Calu3 (cell line): ENCODE measurements at regions of chr7 and their contacts with region 1.

Region 1: GRCh38 chr7:129367700-129368388 is 66.4 kb upstream of the STRIP2 start:
- DNase-seq: peak; percentile 84
- H3K4me3 Mint-ChIP-seq: peak overlapping the region; percentile 74
- H3K27ac Mint-ChIP-seq: peak overlapping the region; percentile 87
- H3K4me1 Mint-ChIP-seq: peaks cover 29% of the 10 kb centered on the region
- H3K27me3 Mint-ChIP-seq: no peaks in the 10 kb centered on the region
- CTCF ChIP-seq: peak; percentile 76

Region 2: GRCh38 chr7:129188372-129188891 is 179.4 kb before region 1 on chr7 and contains the start of gene SMO:
- CTCF ChIA-PET with region 1: no interaction called
- intact Hi-C with region 1: no loop called
- DNase-seq: no peak
- H3K4me3 Mint-ChIP-seq: peak within 1 kb of the TSS; percentile 65
- H3K27ac Mint-ChIP-seq: no peak within 1 kb of the TSS
- H3K4me1 Mint-ChIP-seq: peaks cover 9% of the 10 kb centered on the region
- H3K27me3 Mint-ChIP-seq: peaks cover 55% of the 10 kb centered on the region
- CTCF ChIP-seq: no peak
- total RNA-seq, gene SMO: 2.1 and 3.6 TPM in 2 replicates

Region 3: GRCh38 chr7:129224251-129225205 is 143.3 kb before region 1 on chr7 and contains the start of gene AHCYL2:
- CTCF ChIA-PET with region 1: interaction called, 3 read pairs
- intact Hi-C with region 1: loop called (anchors 10 kb)
- DNase-seq: peak; percentile 96
- H3K4me3 Mint-ChIP-seq: peak within 1 kb of the TSS; percentile 84
- H3K27ac Mint-ChIP-seq: peak within 1 kb of the TSS; percentile 95
- H3K4me1 Mint-ChIP-seq: peaks cover 10% of the 10 kb centered on the region
- H3K27me3 Mint-ChIP-seq: no peaks in the 10 kb centered on the region
- CTCF ChIP-seq: no peak
- total RNA-seq, gene AHCYL2: 54.6 and 66.4 TPM in 2 replicates

Region 4: DNA sequence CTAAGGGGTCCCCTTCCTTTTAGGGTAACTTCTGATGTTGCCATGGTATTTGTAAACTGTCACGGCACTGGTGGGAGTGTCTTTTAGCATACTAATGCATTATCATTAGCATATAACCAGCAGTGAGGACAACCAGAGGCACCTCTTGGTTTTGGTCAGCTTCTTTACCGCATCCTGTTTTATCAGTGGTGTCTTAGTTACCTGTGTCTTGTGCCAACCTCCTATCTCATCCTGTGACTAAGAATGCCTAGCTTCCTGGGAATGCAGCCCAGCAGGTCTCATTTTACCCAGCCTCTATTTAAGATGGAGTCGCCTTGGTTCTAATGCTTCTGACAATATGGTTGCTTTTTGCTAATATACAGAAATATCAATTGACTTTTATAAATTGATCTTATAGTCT is 88.1 kb before region 1 on chr7:
- CTCF ChIA-PET with region 1: no interaction called
- intact Hi-C with region 1: no loop called
- DNase-seq: peak; percentile 4
- H3K4me3 Mint-ChIP-seq: no peak overlapping the region
- H3K27ac Mint-ChIP-seq: no peak overlapping the region
- H3K4me1 Mint-ChIP-seq: peaks cover 37% of the 10 kb centered on the region
- H3K27me3 Mint-ChIP-seq: no peaks in the 10 kb centered on the region
- CTCF ChIP-seq: no peak

Region 5: DNA sequence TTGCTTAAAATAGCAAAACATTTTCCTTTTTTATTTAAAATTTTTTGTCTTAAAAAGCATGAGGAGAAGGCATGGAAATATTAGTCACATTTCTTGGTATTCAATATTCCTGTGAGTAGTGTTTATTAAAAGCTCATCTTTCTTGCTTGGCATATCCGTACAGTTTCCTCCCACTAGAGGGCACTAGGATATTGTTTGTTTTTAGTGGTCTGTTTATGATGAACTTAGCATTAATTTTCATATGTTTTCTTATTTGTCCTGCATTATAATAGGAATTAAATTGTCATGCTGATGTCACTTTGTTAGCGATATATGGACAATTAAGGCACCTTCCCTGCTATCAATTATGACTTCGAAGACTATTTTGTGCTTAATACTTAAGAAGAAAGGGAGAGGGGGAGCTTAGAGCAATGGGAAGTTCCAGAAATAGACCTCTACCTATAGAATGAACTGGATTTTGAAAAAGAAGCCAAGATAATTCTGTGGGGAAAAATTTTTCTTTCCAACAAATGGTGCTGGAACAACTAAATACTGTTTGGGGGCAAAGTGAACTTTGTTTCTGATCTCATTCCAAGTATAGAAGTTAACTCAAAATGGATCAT is 24.6 kb before region 1 on chr7:
- CTCF ChIA-PET with region 1: interaction called, 26 read pairs
- intact Hi-C with region 1: no loop called
- DNase-seq: peak; percentile 38
- H3K4me3 Mint-ChIP-seq: no peak overlapping the region
- H3K27ac Mint-ChIP-seq: no peak overlapping the region
- H3K4me1 Mint-ChIP-seq: no peaks in the 10 kb centered on the region
- H3K27me3 Mint-ChIP-seq: no peaks in the 10 kb centered on the region
- CTCF ChIP-seq: peak; percentile 49

Region 6: DNA sequence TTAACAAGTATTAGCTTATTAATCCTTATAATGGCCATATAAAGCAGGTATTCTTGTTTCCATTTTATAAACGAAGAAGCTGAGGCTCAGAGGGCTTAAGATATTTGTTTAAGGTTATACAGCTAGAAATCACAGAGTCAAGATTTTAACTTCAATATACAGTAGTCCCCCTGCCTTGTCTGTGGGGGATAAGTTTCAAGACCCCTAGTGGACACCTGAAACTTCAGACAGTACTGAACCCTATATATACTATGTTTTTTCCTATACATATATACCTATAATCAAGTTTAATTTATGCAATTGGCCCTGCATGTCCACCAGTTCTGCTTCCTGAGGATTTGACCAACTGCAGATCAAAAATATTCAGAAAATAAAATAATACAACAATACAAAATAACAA is 22.0 kb after region 1 on chr7:
- CTCF ChIA-PET with region 1: no interaction called
- intact Hi-C with region 1: no loop called
- DNase-seq: no peak
- H3K4me3 Mint-ChIP-seq: no peak overlapping the region
- H3K27ac Mint-ChIP-seq: no peak overlapping the region
- H3K4me1 Mint-ChIP-seq: no peaks in the 10 kb centered on the region
- H3K27me3 Mint-ChIP-seq: no peaks in the 10 kb centered on the region
- CTCF ChIP-seq: no peak

Region 7: GRCh38 chr7:129401967-129402860 is 34.4 kb after region 1 on chr7:
- CTCF ChIA-PET with region 1: interaction called, 13 read pairs
- intact Hi-C with region 1: no loop called
- DNase-seq: no peak
- H3K4me3 Mint-ChIP-seq: no peak overlapping the region
- H3K27ac Mint-ChIP-seq: no peak overlapping the region
- H3K4me1 Mint-ChIP-seq: no peaks in the 10 kb centered on the region
- H3K27me3 Mint-ChIP-seq: no peaks in the 10 kb centered on the region
- CTCF ChIP-seq: no peak

Region 8: DNA sequence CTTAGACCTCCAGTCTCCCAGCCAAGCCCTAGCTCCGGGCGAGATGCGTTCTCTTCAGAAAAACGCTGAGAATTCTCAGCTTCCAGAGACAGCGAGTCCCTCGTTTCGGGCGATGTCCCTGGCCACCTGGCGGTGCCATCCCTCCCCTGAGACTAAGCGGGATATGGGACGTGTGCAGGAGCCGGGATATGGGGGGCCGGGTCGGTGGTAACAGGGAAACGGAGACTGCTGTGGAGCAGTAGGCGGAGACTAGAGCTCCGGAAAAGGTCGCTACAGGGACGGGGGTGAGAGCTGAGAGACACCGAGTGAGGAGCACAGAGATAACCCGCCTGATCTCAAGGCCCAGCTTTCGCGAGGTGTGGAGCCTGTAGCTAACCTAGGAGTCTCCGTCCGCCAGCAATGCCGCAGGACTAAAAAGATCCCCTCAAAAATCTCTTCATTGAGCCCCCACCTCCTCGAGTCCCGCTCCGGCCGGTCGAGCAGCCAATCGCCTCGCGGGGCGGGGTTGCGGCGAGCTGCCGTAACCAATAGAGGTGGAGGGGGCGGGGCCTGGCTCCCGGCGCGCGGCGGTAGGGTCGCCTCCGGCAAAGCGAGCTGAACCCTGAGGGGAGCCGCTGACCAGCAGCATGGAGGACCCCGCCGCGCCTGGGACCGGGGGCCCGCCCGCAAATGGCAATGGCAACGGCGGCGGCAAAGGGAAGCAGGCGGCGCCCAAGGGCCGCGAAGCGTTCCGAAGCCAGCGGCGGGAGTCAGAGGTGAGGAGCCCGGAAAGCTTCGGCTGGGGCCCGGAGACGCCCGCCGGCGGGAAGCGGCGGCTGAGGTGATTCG is 66.2 kb after region 1 on chr7 and contains the start of gene STRIP2:
- CTCF ChIA-PET with region 1: interaction called, 21 read pairs
- intact Hi-C with region 1: no loop called
- DNase-seq: peak; percentile 94
- H3K4me3 Mint-ChIP-seq: peak within 1 kb of the TSS; percentile 94
- H3K27ac Mint-ChIP-seq: peak within 1 kb of the TSS; percentile 73
- H3K4me1 Mint-ChIP-seq: peaks cover 29% of the 10 kb centered on the region
- H3K27me3 Mint-ChIP-seq: peaks cover 15% of the 10 kb centered on the region
- CTCF ChIP-seq: no peak
- total RNA-seq, gene STRIP2: 10.1 and 13.2 TPM in 2 replicates

Region 9: GRCh38 chr7:129468087-129468486 is 100.2 kb after region 1 on chr7:
- CTCF ChIA-PET with region 1: interaction called, 9 read pairs
- intact Hi-C with region 1: loop called (anchors 1 kb)
- DNase-seq: no peak
- H3K4me3 Mint-ChIP-seq: no peak overlapping the region
- H3K27ac Mint-ChIP-seq: no peak overlapping the region
- H3K4me1 Mint-ChIP-seq: no peaks in the 10 kb centered on the region
- H3K27me3 Mint-ChIP-seq: no peaks in the 10 kb centered on the region
- CTCF ChIP-seq: no peak

Region 10: DNA sequence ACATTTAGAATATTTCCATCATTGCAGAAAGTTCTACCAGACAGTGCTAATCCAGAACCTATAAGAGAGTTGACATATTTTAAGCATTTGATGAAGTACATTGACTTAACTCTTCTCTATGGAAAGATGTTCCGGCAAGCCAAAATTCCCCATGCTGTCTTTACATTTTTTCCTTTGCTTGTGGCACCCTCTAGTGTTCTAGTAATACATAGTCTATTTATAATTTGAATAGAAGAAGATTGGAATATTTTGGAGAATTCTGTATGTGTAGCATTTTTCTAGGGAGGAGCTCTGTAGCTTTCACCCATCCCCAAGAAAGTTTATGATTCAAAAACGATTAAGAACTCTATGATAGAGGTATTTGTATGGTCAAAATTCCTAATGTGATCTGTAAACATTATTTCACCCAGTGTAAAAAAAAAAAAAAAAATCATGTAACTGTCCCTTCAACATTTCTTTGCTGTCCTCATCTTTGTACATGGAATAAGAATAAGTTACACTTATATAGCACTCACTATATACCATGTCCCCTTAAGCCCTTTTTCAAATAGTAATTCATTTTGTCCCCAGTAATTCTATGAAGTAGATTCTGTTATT is 276.9 kb after region 1 on chr7:
- CTCF ChIA-PET with region 1: interaction called, 8 read pairs
- intact Hi-C with region 1: loop called (anchors 5 kb)
- DNase-seq: peak; percentile 22
- H3K4me3 Mint-ChIP-seq: no peak overlapping the region
- H3K27ac Mint-ChIP-seq: no peak overlapping the region
- H3K4me1 Mint-ChIP-seq: peaks cover 33% of the 10 kb centered on the region
- H3K27me3 Mint-ChIP-seq: no peaks in the 10 kb centered on the region
- CTCF ChIP-seq: peak; percentile 31